Lower lobe of right lung (tissue), 2 donors: ENCODE measurements at regions of chr18 and their contacts with region 1.

Region 1: DNA sequence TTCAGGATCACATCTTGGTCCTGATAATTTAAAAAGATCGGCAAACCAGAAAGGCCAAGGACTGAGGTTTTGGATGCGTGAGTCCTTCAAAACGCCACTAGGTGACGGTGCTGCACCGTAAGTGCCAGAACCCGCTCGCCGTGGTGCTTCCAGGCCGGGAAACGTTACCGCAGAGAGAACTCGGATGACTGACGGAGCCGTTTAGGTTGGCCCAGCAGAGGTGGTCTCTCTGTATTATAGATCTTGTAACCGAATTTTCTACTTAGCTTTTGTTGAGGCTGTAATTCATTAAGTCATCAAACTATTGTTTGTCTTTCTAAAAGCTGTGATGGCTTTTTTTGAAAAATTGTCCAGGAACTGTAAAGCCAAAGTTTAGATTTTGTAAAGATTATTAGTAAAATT is 39.8 kb upstream of the ADCYAP1 start:
- DNase-seq: peak; percentile 64
- ATAC-seq: peak; percentile 83 to 93
- H3K4me3 ChIP-seq: no peak overlapping the region
- H3K27ac ChIP-seq: no peak overlapping the region
- H3K4me1 ChIP-seq: no peaks in the 10 kb centered on the region
- H3K27me3 ChIP-seq: peaks cover 12% of the 10 kb centered on the region
- CTCF ChIP-seq: peak; percentile 95

Region 2: GRCh38 chr18:944440-944839 is 79.6 kb after region 1 on chr18:
- intact Hi-C with region 1: no loop called
- DNase-seq: no peak
- ATAC-seq: no peak
- H3K4me3 ChIP-seq: no peak overlapping the region
- H3K27ac ChIP-seq: no peak overlapping the region
- H3K4me1 ChIP-seq: no peaks in the 10 kb centered on the region
- H3K27me3 ChIP-seq: no peaks in the 10 kb centered on the region
- CTCF ChIP-seq: no peak

Region 3: GRCh38 chr18:961644-962355 is 96.9 kb after region 1 on chr18:
- intact Hi-C with region 1: loop called (anchors 10 kb)
- DNase-seq: no peak
- ATAC-seq: no peak
- H3K4me3 ChIP-seq: peak overlapping the region; percentile 32
- H3K27ac ChIP-seq: no peak overlapping the region
- H3K4me1 ChIP-seq: no peaks in the 10 kb centered on the region
- H3K27me3 ChIP-seq: peaks cover 5% of the 10 kb centered on the region
- CTCF ChIP-seq: peak; percentile 91